ENCODE measurements at regions of chr4 and their contacts with region 1.

Region 1: GRCh38 chr4:124275-125081 is at the start of gene ZNF718:
- DNase-seq: peak; percentile 97
- ATAC-seq: peak; percentile 98
- H3K4me3 Mint-ChIP-seq: peak within 1 kb of the TSS; percentile 91
- H3K27ac Mint-ChIP-seq: peak within 1 kb of the TSS; percentile 100
- H3K4me1 Mint-ChIP-seq: peaks cover 44% of the 10 kb centered on the region
- H3K27me3 Mint-ChIP-seq: no peaks in the 10 kb centered on the region
- total RNA-seq, gene ZNF718: 9.7 to 10.3 TPM

Region 2: GRCh38 chr4:114149-114548 is 10.3 kb before region 1 on chr4:
- CTCF ChIA-PET with region 1: interaction called, 13 read pairs
- POLR2A ChIA-PET with region 1: no interaction called
- intact Hi-C with region 1: no loop called
- DNase-seq: no peak
- ATAC-seq: peak; percentile 70
- H3K4me3 Mint-ChIP-seq: no peak overlapping the region
- H3K27ac Mint-ChIP-seq: no peak overlapping the region
- H3K4me1 Mint-ChIP-seq: peaks cover 4% of the 10 kb centered on the region
- H3K27me3 Mint-ChIP-seq: peaks cover 21% of the 10 kb centered on the region

Region 3: GRCh38 chr4:188076-188475 is 63.6 kb after region 1 on chr4:
- CTCF ChIA-PET with region 1: no interaction called
- POLR2A ChIA-PET with region 1: no interaction called
- intact Hi-C with region 1: no loop called
- DNase-seq: no peak
- ATAC-seq: no peak
- H3K4me3 Mint-ChIP-seq: no peak overlapping the region
- H3K27ac Mint-ChIP-seq: no peak overlapping the region
- H3K4me1 Mint-ChIP-seq: no peaks in the 10 kb centered on the region
- H3K27me3 Mint-ChIP-seq: no peaks in the 10 kb centered on the region

Region 4: DNA sequence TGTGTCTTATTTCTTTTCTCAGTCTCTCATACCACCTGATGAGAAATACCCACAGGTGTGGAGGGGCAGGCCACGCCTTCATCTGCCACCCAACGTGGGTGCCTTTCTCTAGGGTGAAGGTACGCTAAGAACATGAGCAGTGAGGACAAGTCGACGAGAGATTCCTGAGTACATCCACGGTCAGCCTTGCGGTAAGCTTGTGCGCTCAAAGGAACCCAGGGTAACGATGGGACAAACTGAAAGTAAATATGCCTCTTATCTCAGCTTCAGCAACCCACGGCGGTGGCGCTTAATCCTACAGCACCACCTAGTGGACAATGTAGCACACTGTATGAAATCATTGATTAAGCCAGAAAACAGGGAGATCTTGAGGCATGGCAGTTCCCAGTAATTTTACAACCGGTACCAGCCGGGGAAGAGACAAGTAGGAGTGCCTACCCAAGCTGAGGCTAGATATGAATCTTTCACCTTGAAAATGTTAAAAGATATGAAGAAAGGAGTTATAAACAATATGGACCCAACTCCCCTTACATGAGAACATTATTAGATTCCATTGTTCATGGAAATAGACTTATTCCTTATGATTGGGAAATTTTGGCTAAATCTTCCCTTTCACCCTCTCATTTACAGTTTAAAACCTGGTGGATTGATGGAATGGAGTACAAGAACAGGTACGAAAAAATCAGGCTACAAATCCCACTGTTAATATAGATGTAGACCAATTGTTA is 117.8 kb after region 1 on chr4:
- CTCF ChIA-PET with region 1: interaction called, 4 read pairs
- POLR2A ChIA-PET with region 1: no interaction called
- intact Hi-C with region 1: loop called in 1 of 2 experiments (anchors 2 kb)
- DNase-seq: peak; percentile 81
- ATAC-seq: peak; percentile 96
- H3K4me3 Mint-ChIP-seq: peak overlapping the region; percentile 76
- H3K27ac Mint-ChIP-seq: peak overlapping the region; percentile 86
- H3K4me1 Mint-ChIP-seq: peaks cover 7% of the 10 kb centered on the region
- H3K27me3 Mint-ChIP-seq: no peaks in the 10 kb centered on the region

Region 5: GRCh38 chr4:337143-337931 is 212.9 kb after region 1 on chr4 and contains the start of gene ZNF141:
- CTCF ChIA-PET with region 1: no interaction called
- POLR2A ChIA-PET with region 1: interaction called, 4 read pairs
- intact Hi-C with region 1: loop called in 1 of 2 experiments (anchors 1 kb)
- DNase-seq: peak; percentile 95
- ATAC-seq: peak; percentile 96
- H3K4me3 Mint-ChIP-seq: peak within 1 kb of the TSS; percentile 99
- H3K27ac Mint-ChIP-seq: peak within 1 kb of the TSS; percentile 100
- H3K4me1 Mint-ChIP-seq: peaks cover 24% of the 10 kb centered on the region
- H3K27me3 Mint-ChIP-seq: no peaks in the 10 kb centered on the region
- total RNA-seq, gene ZNF141: 26.5 to 35.3 TPM

Region 6: DNA sequence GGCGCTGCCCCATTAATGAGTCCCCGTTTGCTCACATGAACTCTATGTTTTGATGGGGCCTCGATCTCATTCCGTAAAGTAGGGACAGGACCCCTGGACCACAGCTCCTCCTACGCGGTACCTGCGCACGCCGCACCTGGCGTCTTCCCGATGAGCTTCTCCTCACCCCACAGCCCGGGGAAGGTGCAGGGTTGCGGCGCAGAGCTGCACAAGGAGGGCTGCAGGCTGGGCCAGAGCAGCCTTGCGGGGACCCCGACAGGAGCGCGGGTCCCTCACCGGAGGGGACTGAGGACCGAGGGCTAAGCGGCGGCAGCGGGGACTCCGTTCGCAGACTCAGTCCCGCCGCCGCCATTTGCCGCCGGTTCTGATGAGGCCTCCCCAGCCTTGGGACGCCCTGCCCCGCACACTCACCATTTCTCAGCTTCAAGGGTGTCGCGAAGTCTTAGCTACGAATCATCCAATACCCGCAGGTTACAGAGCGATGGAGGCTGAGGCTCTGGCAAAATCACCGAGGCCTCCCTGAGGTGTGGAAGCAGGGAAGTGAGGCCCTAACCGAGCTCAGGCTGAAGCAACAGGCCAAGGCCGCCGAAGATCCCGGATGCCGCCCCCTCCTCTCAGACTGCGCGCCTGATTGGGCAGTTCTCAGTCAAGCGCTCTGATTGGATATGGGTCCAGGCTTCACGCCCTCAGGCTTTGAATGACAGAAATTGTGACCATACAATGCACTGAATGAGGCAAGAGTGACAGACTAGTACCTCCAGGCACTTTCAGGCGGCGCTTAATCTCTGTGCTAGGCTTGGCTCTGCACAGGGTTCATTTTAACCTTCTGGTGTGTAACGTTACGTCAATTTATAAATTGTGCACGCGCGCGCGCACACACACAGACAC is 349.3 kb after region 1 on chr4:
- CTCF ChIA-PET with region 1: no interaction called
- POLR2A ChIA-PET with region 1: interaction called, 6 read pairs
- intact Hi-C with region 1: loop called in 1 of 2 experiments (anchors 1 kb)
- DNase-seq: peak; percentile 96
- ATAC-seq: peak; percentile 99
- H3K4me3 Mint-ChIP-seq: peak overlapping the region; percentile 98
- H3K27ac Mint-ChIP-seq: peak overlapping the region; percentile 100
- H3K4me1 Mint-ChIP-seq: peaks cover 38% of the 10 kb centered on the region
- H3K27me3 Mint-ChIP-seq: no peaks in the 10 kb centered on the region

Region 7: DNA sequence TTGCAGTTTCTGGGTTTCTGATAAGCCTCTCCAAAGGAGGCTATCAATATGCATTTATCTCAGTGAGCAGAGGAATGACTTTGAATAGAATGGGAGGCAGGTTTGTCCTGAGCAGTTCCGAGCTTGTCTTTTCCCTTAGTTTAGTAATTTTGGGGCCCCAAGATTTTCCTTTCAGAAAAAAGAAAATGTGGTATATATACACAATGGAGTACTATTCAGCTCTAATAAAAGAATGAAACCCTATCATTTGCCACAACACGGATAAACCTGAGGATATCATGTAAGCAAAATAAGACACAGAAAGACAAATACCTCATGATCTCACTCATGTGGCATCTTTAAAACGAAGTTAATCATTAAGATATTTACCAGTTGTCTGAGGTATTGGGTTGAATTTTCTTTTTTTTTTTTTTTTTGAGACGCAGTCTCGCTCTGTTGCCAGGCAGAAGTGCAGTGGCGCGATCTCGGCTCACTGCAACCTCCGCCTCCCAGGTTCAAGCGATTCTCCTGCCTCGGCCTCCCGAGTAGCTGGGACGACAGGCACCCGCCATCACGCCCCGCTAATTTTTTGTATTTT is 373.9 kb after region 1 on chr4:
- CTCF ChIA-PET with region 1: no interaction called
- POLR2A ChIA-PET with region 1: no interaction called
- intact Hi-C with region 1: loop called in 1 of 2 experiments (anchors 1 kb)
- DNase-seq: no peak
- ATAC-seq: peak; percentile 23
- H3K4me3 Mint-ChIP-seq: peak overlapping the region; percentile 94
- H3K27ac Mint-ChIP-seq: peak overlapping the region; percentile 97
- H3K4me1 Mint-ChIP-seq: peaks cover 33% of the 10 kb centered on the region
- H3K27me3 Mint-ChIP-seq: no peaks in the 10 kb centered on the region